HAP-1 (cell line): ENCODE measurements at regions of chr1 and their contacts with region 1.

Region 1: GRCh38 chr1:25997828-25998761 is at the start of gene PAFAH2:
- DNase-seq: peak; percentile 97
- H3K4me3 ChIP-seq: peak within 1 kb of the TSS; percentile 63
- H3K4me1 ChIP-seq: peaks cover 14% of the 10 kb centered on the region
- H3K27me3 ChIP-seq: no peaks in the 10 kb centered on the region

Region 2: GRCh38 chr1:25895365-25895993 is 102.6 kb before region 1 on chr1:
- in situ Hi-C with region 1: loop called (anchors 5 kb)
- DNase-seq: peak; percentile 78 to 92
- H3K4me3 ChIP-seq: no peak overlapping the region
- H3K4me1 ChIP-seq: peaks cover 5% of the 10 kb centered on the region
- H3K27me3 ChIP-seq: no peaks in the 10 kb centered on the region